Body of pancreas (tissue), 4 donors: ENCODE measurements at regions of chr4 and their contacts with region 1.

Region 1: GRCh38 chr4:88533937-88534750 is 10.6 kb upstream of the PYURF start:
- DNase-seq: no peak
- ATAC-seq: no peak
- H3K4me3 ChIP-seq: no peak overlapping the region
- H3K27ac ChIP-seq: no peak overlapping the region
- H3K4me1 ChIP-seq: peaks cover 1% of the 10 kb centered on the region
- H3K27me3 ChIP-seq: no peaks in the 10 kb centered on the region
- CTCF ChIP-seq: no peak
- POLR2A ChIP-seq: no peak

Region 2: GRCh38 chr4:88659055-88659889 is 125.1 kb after region 1 on chr4:
- intact Hi-C with region 1: loop called (anchors 5 kb)
- DNase-seq: peak; percentile 56 to 75 (median 66)
- ATAC-seq: peak; percentile 91
- H3K4me3 ChIP-seq: no peak overlapping the region
- H3K27ac ChIP-seq: peak overlapping the region in 1 of 4 donors; percentile 31
- H3K4me1 ChIP-seq: peaks cover 9% of the 10 kb centered on the region
- H3K27me3 ChIP-seq: no peaks in the 10 kb centered on the region
- CTCF ChIP-seq: peak; percentile 32 to 87 (median 78)
- POLR2A ChIP-seq: no peak